CD8-positive, alpha-beta T cell (primary cell): ENCODE measurements at regions of chr1 and their contacts with region 1.

Region 1: GRCh38 chr1:1040004-1040991 is 20.4 kb downstream of the AGRN start:
- DNase-seq: peak; percentile 67 to 94 (median 81)
- ATAC-seq: peak; percentile 94
- H3K4me3 ChIP-seq: peak overlapping the region; percentile 33 to 57
- H3K4me3 Mint-ChIP-seq: peak overlapping the region; percentile 72
- H3K27ac ChIP-seq: no peak overlapping the region
- H3K27ac Mint-ChIP-seq: no peak overlapping the region
- H3K4me1 ChIP-seq: peaks cover 21% of the 10 kb centered on the region
- H3K4me1 Mint-ChIP-seq: peaks cover 14% of the 10 kb centered on the region
- H3K27me3 ChIP-seq: peaks cover 0 to 6% of the 10 kb centered on the region in 2 experiments
- H3K27me3 Mint-ChIP-seq: peaks cover 19% of the 10 kb centered on the region
- CTCF ChIP-seq: no peak

Region 2: DNA sequence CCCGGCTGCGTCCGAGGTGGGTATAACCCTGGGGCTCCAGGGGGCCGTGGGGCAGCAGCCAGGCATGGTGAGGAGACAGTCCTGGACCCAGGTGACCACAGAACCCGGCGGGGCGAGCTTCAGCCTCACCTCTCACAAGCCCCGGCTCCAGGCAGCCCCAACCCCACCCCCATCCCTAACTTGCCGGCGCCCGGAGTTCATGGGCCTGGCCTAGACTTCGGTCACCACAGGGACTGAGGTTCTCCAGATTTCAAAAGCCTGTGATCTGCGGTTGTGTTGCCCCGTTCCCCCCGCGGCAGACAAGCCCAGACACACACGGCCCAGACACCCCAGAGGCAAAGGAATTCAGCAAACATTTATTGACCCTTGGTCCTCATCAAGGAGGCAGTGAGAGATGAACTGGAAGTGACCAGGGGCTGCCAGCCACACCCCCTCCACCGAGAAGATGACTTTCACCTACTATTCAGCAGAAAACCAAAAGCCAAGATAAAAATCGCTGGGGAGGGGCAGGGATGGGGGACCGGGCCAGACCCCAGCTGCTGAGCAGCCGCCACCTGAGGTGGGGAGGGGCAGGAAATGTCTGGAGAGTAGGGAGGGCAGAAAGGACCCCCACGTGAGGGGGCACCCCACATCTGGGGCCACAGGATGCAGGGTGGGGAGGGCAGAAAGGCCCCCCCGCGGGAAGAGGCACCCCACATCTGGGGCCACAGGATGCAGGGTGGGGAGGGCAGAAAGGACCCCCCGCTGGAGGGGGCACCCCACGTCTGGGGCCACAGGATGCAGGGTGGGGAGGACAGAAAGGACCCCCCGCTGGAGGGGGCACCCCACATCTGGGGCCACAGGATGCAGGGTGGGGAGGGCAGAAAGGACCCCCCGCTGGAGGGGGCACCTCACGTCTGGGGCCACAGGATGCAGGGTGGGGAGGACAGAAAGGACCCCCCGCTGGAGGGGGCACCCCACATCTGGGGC is 44.3 kb before region 1 on chr1:
- CTCF ChIA-PET with region 1: no interaction called
- POLR2A ChIA-PET with region 1: no interaction called
- intact Hi-C with region 1: no loop called
- DNase-seq: peak in 2 of 9 experiments; percentile 38 to 54
- ATAC-seq: no peak
- H3K4me3 ChIP-seq: no peak overlapping the region
- H3K4me3 Mint-ChIP-seq: no peak overlapping the region
- H3K27ac ChIP-seq: no peak overlapping the region
- H3K27ac Mint-ChIP-seq: no peak overlapping the region
- H3K4me1 ChIP-seq: peaks cover 40% of the 10 kb centered on the region
- H3K4me1 Mint-ChIP-seq: peaks cover 16% of the 10 kb centered on the region
- H3K27me3 ChIP-seq: peaks cover 14 to 30% of the 10 kb centered on the region in 2 experiments
- H3K27me3 Mint-ChIP-seq: peaks cover 23% of the 10 kb centered on the region
- CTCF ChIP-seq: no peak

Region 3: GRCh38 chr1:1019122-1019999 is 20.9 kb before region 1 on chr1:
- CTCF ChIA-PET with region 1: interaction called, 4 read pairs
- POLR2A ChIA-PET with region 1: interaction called, 4 read pairs
- intact Hi-C with region 1: loop called (anchors 1 kb)
- DNase-seq: peak; percentile 62 to 89 (median 81)
- ATAC-seq: peak; percentile 85
- H3K4me3 ChIP-seq: peak overlapping the region; percentile 35 to 39
- H3K4me3 Mint-ChIP-seq: peak overlapping the region; percentile 77
- H3K27ac ChIP-seq: peak overlapping the region in 1 of 2 experiments; percentile 14
- H3K27ac Mint-ChIP-seq: peak overlapping the region; percentile 32
- H3K4me1 ChIP-seq: peaks cover 13% of the 10 kb centered on the region
- H3K4me1 Mint-ChIP-seq: peaks cover 21% of the 10 kb centered on the region
- H3K27me3 ChIP-seq: peaks cover 0 to 6% of the 10 kb centered on the region in 2 experiments
- H3K27me3 Mint-ChIP-seq: no peaks in the 10 kb centered on the region
- CTCF ChIP-seq: no peak

Region 4: GRCh38 chr1:1059494-1060280 is 19.4 kb after region 1 on chr1:
- CTCF ChIA-PET with region 1: interaction called, 9 read pairs
- POLR2A ChIA-PET with region 1: no interaction called
- intact Hi-C with region 1: loop called in 1 of 2 experiments (anchors 1 kb)
- DNase-seq: peak; percentile 86 to 96 (median 90)
- ATAC-seq: peak; percentile 67
- H3K4me3 ChIP-seq: peak overlapping the region; percentile 19 to 66
- H3K4me3 Mint-ChIP-seq: peak overlapping the region; percentile 51
- H3K27ac ChIP-seq: no peak overlapping the region
- H3K27ac Mint-ChIP-seq: no peak overlapping the region
- H3K4me1 ChIP-seq: peaks cover 45% of the 10 kb centered on the region
- H3K4me1 Mint-ChIP-seq: peaks cover 13% of the 10 kb centered on the region
- H3K27me3 ChIP-seq: peaks cover 0 to 38% of the 10 kb centered on the region in 2 experiments
- H3K27me3 Mint-ChIP-seq: peaks cover 17% of the 10 kb centered on the region
- CTCF ChIP-seq: no peak

Region 5: DNA sequence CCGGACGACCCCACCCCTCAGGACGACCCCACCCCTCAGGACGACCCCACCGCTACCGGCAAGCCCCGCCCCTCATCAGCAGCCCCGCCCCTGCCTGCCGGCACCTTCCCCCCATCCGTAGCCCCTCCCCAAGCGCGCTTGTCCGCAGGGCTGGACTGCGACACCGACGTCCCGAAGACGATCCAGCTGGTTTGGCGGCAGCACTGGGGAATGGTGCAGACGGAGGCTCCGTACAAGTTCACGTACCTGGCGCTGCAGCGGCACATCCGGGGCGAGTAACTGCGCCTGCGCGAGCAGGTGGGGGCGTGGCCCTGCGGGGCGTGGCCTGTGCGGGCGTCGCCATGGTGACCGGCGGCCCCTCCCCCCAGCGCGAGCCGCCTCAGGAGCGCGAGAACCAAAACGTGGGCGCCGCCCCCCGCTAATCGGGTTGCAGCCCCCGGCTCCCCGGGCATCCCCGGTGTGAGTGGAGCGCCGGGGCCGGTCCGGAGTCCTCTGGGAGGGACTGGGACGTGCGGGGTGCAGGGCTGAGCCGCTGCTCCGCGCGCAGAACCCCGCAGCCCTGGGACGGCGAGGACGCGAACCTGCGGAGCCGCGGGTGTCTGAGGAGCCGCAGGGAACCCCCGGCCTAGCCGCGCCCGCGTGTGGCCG is 28.9 kb after region 1 on chr1:
- CTCF ChIA-PET with region 1: interaction called, 9 read pairs
- POLR2A ChIA-PET with region 1: no interaction called
- intact Hi-C with region 1: loop called in 1 of 2 experiments (anchors 2 kb)
- DNase-seq: peak; percentile 86 to 97 (median 89)
- ATAC-seq: peak; percentile 58
- H3K4me3 ChIP-seq: peak overlapping the region; percentile 65 to 88
- H3K4me3 Mint-ChIP-seq: peak overlapping the region; percentile 81
- H3K27ac ChIP-seq: peak overlapping the region; percentile 53 to 55
- H3K27ac Mint-ChIP-seq: peak overlapping the region; percentile 80
- H3K4me1 ChIP-seq: peaks cover 20% of the 10 kb centered on the region
- H3K4me1 Mint-ChIP-seq: peaks cover 7% of the 10 kb centered on the region
- H3K27me3 ChIP-seq: peaks cover 0 to 8% of the 10 kb centered on the region in 2 experiments
- H3K27me3 Mint-ChIP-seq: no peaks in the 10 kb centered on the region
- CTCF ChIP-seq: no peak